Right ventricle myocardium superior (tissue), 1 donor: ENCODE measurements at regions of chr7 and their contacts with region 1.

Region 1: DNA sequence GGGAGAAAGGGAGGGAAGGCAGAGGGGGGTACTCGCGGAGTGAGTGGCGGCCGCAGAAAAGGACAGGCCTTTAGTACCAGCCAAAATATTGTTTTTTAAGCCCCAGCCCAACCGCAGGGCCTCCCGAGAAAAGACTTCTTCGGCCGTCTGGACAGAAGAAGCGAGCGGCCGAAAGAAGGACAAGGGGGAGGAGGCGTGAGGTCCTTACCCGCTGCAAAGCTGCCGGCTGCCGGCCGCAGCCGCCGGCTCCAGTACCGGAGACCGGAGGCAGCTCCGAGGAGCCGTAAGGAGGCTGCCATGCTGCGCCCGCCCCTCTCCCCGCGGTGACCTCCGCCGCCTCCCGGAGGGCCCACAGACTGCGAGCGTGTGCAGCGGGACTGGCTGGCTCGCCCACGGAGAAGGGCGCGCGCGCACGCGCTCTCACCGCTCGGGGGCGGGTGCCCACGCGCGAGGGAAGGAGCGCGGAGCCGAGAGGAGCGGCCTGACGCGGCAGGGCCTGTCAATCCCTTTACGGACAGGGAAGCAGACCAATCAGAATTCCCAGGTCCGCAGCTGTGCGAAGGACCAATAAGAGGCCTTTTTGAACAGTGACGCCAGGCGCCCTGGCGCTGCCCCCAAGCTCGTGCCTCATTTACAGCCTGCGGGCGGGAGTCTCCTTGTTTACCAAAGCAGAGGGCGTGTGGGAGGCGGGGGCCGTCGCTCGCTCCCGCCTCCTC is at the start of gene HIBADH:
- DNase-seq: peak; percentile 100
- ATAC-seq: peak; percentile 98
- total RNA-seq, gene HIBADH: 113 TPM

Region 2: DNA sequence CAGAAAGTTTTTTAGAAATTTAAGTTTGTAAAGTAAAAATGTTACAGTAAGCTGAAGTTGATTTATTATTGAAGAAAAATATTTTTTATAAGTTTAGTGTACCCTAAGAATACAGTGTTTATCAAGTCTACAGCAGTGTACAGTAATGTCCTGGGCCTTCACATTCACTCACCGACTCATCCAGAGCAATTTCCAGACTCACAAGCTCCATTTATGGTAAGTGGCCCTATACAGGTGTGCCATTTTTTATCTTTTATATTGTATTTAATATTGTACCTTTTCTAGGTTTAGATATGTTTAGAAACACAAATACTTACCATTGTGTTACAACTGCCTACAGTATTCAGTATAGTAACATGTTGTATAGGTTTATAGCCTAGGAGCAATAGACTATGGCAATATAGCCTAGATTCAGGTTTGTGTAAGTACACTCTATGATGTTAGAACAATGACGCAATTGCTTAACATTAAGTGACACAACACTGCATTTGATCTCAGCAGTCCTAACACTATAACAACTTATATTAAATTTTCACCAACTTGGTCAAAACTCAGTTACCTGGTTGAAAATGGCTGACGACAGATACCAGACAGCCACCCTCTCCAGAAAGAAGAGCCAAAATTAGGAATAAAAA is 45.6 kb before region 1 on chr7:
- intact Hi-C with region 1: no loop called
- DNase-seq: no peak
- ATAC-seq: no peak

Region 3: DNA sequence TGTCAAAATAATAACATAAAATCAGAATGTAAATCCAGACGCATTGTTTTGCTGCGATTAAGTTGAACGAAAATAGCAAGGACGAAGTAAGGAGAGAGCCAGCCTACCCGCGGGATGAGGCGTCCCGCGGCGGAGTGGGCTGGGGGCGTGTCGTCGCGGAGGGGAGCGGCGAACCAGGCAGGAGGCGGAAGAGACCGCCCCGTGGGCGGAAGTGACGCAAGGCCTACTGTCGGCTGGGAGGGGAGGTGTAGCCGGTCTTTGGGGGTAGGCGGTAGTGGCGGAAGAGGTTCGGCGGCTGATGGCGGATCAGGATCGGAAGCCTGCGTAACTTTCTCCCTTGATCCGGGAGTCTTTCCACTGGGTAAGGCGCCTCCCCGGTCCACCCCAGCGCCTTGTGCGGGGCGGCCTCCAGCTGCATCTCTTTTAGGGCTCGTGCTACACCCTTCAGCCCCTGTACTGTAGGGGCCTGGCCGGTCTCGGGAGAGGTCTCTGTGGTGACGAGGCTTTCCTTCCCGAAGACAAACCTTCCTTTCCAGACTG is 77.3 kb after region 1 on chr7 and contains the start of gene TAX1BP1:
- intact Hi-C with region 1: loop called (anchors 10 kb)
- DNase-seq: peak; percentile 98
- ATAC-seq: peak; percentile 100
- total RNA-seq, gene TAX1BP1: 158 TPM